Activated CD4-positive, alpha-beta memory T cell treated with anti-CD3 and anti-CD28 coated beads, Interleukin-2, amount 10 ng/mL, durations not matched to agents 7 days and 5 days (primary cell): ENCODE measurements at regions of chr2 and their contacts with region 1.

Region 1: DNA sequence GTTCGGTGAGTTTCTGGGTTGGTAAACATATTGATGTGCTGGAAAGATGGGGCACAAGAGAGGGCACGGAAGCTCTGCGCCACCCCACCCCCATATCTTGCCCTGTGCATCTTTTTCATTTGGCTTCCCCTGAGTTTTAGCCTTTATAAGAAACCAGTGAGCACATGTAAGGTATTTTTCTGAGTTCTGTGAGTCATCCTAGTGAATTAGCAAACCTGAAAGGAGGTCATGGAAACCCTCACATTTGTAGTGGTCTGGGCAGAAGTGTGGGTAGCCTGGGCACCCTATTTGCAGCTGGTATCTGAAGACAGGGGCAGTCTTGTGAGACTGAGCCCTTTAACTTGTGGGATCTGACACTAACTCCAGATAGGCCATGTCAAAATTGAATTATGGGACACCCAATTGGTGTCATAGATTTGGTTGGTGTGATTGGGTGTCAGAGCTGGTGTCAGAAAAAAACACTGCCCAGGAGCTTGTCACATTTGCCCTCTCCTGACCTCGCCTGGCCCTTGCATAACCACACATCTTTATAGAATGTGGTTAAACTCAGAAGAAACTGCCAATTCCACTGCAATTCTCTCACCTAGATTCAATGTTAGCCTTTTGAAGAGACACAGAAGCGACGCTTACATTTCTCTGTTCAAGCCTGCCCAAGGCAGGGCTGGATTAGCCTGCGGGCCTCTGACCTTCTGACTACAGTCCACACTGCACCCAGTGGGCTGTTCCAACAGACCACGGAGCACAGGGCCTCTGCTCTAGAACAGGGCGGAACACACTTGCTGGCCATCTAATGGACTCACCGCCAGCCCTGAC is 12.0 kb upstream of the GALM start:
- DNase-seq: peak; percentile 74
- H3K4me3 Mint-ChIP-seq: peak overlapping the region; percentile 64
- H3K27ac Mint-ChIP-seq: peak overlapping the region; percentile 95
- H3K4me1 Mint-ChIP-seq: peaks cover 83% of the 10 kb centered on the region
- H3K27me3 Mint-ChIP-seq: no peaks in the 10 kb centered on the region

Region 2: GRCh38 chr2:38610851-38611801 is 42.8 kb before region 1 on chr2:
- CTCF ChIA-PET with region 1: interaction called, 4 read pairs
- POLR2A ChIA-PET with region 1: interaction called, 646 read pairs
- DNase-seq: peak; percentile 53
- H3K4me3 Mint-ChIP-seq: no peak overlapping the region
- H3K27ac Mint-ChIP-seq: peak overlapping the region; percentile 69
- H3K4me1 Mint-ChIP-seq: peaks cover 79% of the 10 kb centered on the region
- H3K27me3 Mint-ChIP-seq: no peaks in the 10 kb centered on the region

Region 3: GRCh38 chr2:38626326-38627035 is 27.4 kb before region 1 on chr2:
- CTCF ChIA-PET with region 1: interaction called, 21 read pairs
- POLR2A ChIA-PET with region 1: interaction called, 28 read pairs
- DNase-seq: peak; percentile 72
- H3K4me3 Mint-ChIP-seq: peak overlapping the region; percentile 2
- H3K27ac Mint-ChIP-seq: peak overlapping the region; percentile 69
- H3K4me1 Mint-ChIP-seq: peaks cover 36% of the 10 kb centered on the region
- H3K27me3 Mint-ChIP-seq: no peaks in the 10 kb centered on the region

Region 4: DNA sequence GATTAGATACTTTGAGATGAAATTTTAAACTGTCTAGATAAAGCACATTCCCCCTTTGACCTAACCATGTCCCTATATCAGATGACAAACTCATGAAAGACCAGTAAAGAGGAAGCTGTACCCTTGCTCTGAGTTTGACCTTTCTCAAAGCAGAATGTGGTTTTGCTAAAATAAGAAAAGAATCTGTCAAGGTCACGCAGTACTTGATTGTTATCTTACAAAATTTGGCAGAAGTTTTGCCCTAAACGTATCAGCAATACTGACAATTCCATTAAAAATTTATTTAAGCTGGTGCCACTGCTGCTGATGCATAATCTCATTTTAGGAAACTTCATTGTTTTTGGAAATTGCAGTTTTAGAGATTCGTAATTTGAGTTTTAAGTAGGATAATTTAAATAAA is 19.2 kb before region 1 on chr2:
- CTCF ChIA-PET with region 1: no interaction called
- POLR2A ChIA-PET with region 1: interaction called, 11 read pairs
- DNase-seq: no peak
- H3K4me3 Mint-ChIP-seq: no peak overlapping the region
- H3K27ac Mint-ChIP-seq: peak overlapping the region; percentile 52
- H3K4me1 Mint-ChIP-seq: peaks cover 43% of the 10 kb centered on the region
- H3K27me3 Mint-ChIP-seq: no peaks in the 10 kb centered on the region

Region 5: GRCh38 chr2:38643021-38643671 is 10.8 kb before region 1 on chr2:
- CTCF ChIA-PET with region 1: interaction called, 5 read pairs
- POLR2A ChIA-PET with region 1: interaction called, 27 read pairs
- DNase-seq: no peak
- H3K4me3 Mint-ChIP-seq: peak overlapping the region; percentile 64
- H3K27ac Mint-ChIP-seq: peak overlapping the region; percentile 100
- H3K4me1 Mint-ChIP-seq: peaks cover 59% of the 10 kb centered on the region
- H3K27me3 Mint-ChIP-seq: no peaks in the 10 kb centered on the region

Region 6: GRCh38 chr2:38672445-38673391 is 18.8 kb after region 1 on chr2:
- CTCF ChIA-PET with region 1: interaction called, 39 read pairs
- POLR2A ChIA-PET with region 1: interaction called, 268 read pairs
- DNase-seq: no peak
- H3K4me3 Mint-ChIP-seq: no peak overlapping the region
- H3K27ac Mint-ChIP-seq: peak overlapping the region; percentile 9
- H3K4me1 Mint-ChIP-seq: peaks cover 79% of the 10 kb centered on the region
- H3K27me3 Mint-ChIP-seq: no peaks in the 10 kb centered on the region

Region 7: DNA sequence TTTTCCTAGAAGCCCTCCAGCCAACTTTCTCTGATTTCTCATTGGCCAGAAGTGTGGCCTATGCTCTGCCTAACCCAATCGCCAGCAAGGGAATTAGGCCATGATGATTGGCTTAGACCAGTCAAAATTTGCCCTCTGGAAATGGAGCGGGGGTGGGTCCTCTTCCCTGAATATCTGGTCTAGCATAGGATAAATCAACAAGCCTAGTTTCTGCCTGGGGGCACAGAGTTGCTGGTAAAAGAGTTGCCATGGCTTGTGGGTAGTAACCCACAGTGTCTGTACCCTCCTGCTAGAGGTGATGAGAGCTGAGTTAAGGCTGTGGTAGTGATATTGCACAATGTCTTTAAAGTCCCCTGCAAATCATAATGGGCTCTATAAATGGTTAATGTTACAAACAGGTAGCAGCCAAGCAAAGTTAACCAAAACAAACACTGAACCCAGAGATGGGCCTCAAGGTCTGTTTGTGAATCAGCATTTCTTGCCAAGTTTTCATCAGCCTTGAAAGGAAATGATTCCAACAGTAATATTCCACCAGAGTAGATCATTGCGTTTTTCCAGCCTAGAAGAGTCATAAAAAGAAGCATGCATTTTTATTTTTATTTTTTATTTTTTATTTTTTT is 31.3 kb after region 1 on chr2:
- CTCF ChIA-PET with region 1: interaction called, 12 read pairs
- POLR2A ChIA-PET with region 1: interaction called, 35 read pairs
- DNase-seq: no peak
- H3K4me3 Mint-ChIP-seq: no peak overlapping the region
- H3K27ac Mint-ChIP-seq: peak overlapping the region; percentile 12
- H3K4me1 Mint-ChIP-seq: peaks cover 76% of the 10 kb centered on the region
- H3K27me3 Mint-ChIP-seq: no peaks in the 10 kb centered on the region